ENCODE measurements at regions of chr17 and their contacts with region 1.

Region 1: GRCh38 chr17:35242805-35243560 is at the start of gene SLFN5:
- DNase-seq: peak; percentile 90
- H3K4me3 Mint-ChIP-seq: peak within 1 kb of the TSS; percentile 96
- H3K27ac Mint-ChIP-seq: peak within 1 kb of the TSS; percentile 96
- H3K4me1 Mint-ChIP-seq: peaks cover 77% of the 10 kb centered on the region
- H3K27me3 Mint-ChIP-seq: no peaks in the 10 kb centered on the region
- total RNA-seq, gene SLFN5: 10.4 and 11.0 TPM in 2 replicates

Region 2: GRCh38 chr17:35063514-35064223 is 179.3 kb before region 1 on chr17 and contains the start of gene RFFL:
- intact Hi-C with region 1: loop called (anchors 5 kb)
- DNase-seq: peak; percentile 88
- H3K4me3 Mint-ChIP-seq: peak within 1 kb of the TSS; percentile 49
- H3K27ac Mint-ChIP-seq: peak within 1 kb of the TSS; percentile 87
- H3K4me1 Mint-ChIP-seq: peaks cover 66% of the 10 kb centered on the region
- H3K27me3 Mint-ChIP-seq: no peaks in the 10 kb centered on the region
- total RNA-seq, gene RFFL: 28.1 and 28.2 TPM in 2 replicates

Region 3: DNA sequence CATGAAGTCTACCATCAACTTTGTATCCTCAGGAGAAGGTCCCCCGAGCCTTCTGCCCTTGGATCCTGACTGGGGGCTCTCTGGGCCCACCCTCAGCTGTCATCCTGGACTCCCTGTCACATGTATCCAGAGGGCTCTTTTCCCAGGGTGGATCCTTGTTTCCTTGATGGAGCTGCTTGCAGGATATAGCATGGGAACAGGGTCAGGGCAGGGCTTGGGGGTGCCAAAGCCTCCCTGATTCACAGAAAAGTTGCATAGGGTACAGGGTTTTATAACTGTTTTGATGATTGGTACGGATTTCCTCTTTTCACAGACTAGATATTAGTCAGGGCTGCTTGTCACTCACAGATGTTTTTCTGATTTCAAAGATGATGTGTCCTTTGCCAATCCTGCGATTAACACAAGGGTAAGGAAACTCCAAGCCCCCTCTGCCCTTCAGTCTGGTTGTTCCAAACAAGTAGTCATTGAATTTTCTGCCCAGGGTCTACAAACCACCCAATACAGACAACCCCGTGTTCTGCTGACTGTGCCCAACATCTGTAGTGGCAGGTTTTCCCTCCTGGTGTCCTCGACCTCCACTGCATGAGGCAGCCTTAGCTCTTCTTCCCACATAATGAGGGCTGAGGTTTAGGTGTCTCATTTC is 28.2 kb before region 1 on chr17:
- intact Hi-C with region 1: loop called (anchors 1 kb)
- DNase-seq: peak; percentile 12
- H3K4me3 Mint-ChIP-seq: peak overlapping the region; percentile 40
- H3K27ac Mint-ChIP-seq: peak overlapping the region; percentile 92
- H3K4me1 Mint-ChIP-seq: peaks cover 85% of the 10 kb centered on the region
- H3K27me3 Mint-ChIP-seq: no peaks in the 10 kb centered on the region

Region 4: DNA sequence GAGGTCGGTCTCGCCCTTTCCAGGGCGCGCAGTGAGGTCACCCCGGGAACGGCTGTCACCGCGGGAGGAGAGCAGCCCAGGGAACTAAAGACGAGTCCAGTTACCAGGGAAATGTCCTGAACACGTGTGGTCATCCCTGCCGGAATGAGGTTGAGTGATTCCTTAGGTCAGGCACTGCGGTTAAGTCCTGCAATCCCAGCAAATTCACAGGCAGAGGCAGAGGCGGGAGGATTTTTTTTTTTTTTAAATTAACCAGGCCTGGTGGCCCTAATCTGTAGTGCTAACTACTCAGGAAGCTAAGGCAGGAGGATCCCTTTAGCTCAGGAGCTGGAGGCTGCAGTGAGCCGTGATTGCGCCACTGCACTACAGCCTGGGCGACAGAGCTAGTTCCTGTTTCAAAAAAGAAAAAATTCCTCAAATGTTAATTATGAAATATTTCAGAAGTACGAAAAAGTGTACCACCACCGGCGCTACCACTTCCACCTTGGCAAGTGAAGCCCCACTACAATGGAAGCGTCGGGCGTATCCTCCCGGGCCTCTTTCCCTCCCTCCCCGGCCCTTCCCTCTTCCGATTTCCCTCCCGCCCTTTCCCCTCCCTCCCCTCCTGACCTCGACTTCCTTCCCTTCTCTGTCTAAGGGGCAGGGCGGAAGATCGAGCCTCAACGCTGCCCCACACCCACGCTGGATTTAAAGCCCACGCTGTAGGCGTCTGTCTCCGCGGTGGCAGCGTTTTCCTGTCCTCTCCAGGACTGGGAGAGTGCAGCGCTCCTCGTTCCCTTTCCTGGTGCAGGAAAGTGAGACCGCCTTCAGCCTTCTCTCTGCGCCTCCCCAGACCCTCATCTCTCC is 103.2 kb after region 1 on chr17:
- intact Hi-C with region 1: loop called (anchors 1 kb)
- DNase-seq: peak; percentile 26
- H3K4me3 Mint-ChIP-seq: peak overlapping the region; percentile 91
- H3K27ac Mint-ChIP-seq: peak overlapping the region; percentile 40
- H3K4me1 Mint-ChIP-seq: peaks cover 61% of the 10 kb centered on the region
- H3K27me3 Mint-ChIP-seq: peaks cover 9% of the 10 kb centered on the region

Region 5: GRCh38 chr17:35359398-35359797 is 116.4 kb after region 1 on chr17:
- intact Hi-C with region 1: no loop called
- DNase-seq: no peak
- H3K4me3 Mint-ChIP-seq: no peak overlapping the region
- H3K27ac Mint-ChIP-seq: no peak overlapping the region
- H3K4me1 Mint-ChIP-seq: peaks cover 64% of the 10 kb centered on the region
- H3K27me3 Mint-ChIP-seq: no peaks in the 10 kb centered on the region

Region 6: DNA sequence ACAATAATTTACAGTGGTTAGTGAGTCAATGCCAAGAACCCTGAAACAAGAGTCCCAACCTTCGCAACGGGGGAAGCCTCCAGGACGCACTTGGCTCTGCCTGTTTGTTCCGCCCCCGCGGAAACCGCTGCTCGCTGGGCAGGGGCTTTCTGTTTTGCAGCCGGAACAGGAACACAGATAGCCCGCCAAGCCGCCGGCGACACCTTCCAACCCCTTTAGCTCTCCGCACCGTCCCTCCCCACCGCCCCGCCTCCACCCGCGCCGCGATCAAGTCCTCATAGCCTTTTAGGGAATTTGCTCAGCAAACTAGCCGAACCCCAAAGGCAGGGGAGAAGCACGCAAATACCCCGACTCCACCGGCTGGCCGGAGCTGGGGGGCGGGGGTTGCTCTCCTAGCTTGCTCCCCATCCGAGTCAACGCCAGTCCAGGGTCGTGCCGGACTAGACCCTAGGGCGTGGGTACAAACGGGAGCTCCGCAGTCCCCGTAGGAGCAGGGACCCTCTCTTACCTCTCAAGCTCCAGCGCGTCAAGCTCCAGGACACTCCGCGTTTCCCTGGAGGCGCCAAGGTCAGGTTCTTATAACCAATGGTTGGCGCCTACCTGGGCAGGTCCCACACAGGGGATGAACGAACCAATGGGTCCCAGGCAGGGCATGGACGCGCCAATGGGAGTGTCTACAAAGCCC is 205.4 kb after region 1 on chr17 and contains the start of gene SLFN13:
- intact Hi-C with region 1: loop called (anchors 2 kb)
- DNase-seq: peak; percentile 84
- H3K4me3 Mint-ChIP-seq: peak within 1 kb of the TSS; percentile 67
- H3K27ac Mint-ChIP-seq: peak within 1 kb of the TSS; percentile 66
- H3K4me1 Mint-ChIP-seq: peaks cover 27% of the 10 kb centered on the region
- H3K27me3 Mint-ChIP-seq: no peaks in the 10 kb centered on the region
- total RNA-seq, gene SLFN13: 32.2 and 32.7 TPM in 2 replicates

Region 7: GRCh38 chr17:35578197-35578928 is 335.4 kb after region 1 on chr17 and contains the start of gene PEX12:
- intact Hi-C with region 1: loop called (anchors 2 kb)
- DNase-seq: peak; percentile 82
- H3K4me3 Mint-ChIP-seq: peak within 1 kb of the TSS; percentile 100
- H3K27ac Mint-ChIP-seq: peak within 1 kb of the TSS; percentile 99
- H3K4me1 Mint-ChIP-seq: peaks cover 36% of the 10 kb centered on the region
- H3K27me3 Mint-ChIP-seq: peaks cover 2% of the 10 kb centered on the region
- total RNA-seq, gene PEX12: 5.0 and 5.9 TPM in 2 replicates

Region 8: GRCh38 chr17:35808962-35809854 is 566.2 kb after region 1 on chr17 and contains the start of gene TAF15:
- intact Hi-C with region 1: loop called (anchors 5 kb)
- DNase-seq: peak; percentile 95
- H3K4me3 Mint-ChIP-seq: peak within 1 kb of the TSS; percentile 98
- H3K27ac Mint-ChIP-seq: peak within 1 kb of the TSS; percentile 99
- H3K4me1 Mint-ChIP-seq: peaks cover 67% of the 10 kb centered on the region
- H3K27me3 Mint-ChIP-seq: no peaks in the 10 kb centered on the region
- total RNA-seq, gene TAF15: 311 and 322 TPM in 2 replicates

Measured in activated T-helper 1 cell treated with anti-CD3 and anti-CD28 coated beads, Interleukin-12 subunit alpha, Interleukin-12 subunit beta, Interleukin-2, Interleukin-4 antibody, amounts not matched to agents 30 ng/mL and 10 ng/mL and 1 ng/mL, durations not matched to agents 14 hours and 24 hours and 36 hours (primary cell).